Esophagus squamous epithelium (tissue), 5 donors: ENCODE measurements at regions of chr6 and their contacts with region 1.

Region 1: GRCh38 chr6:110398778-110399177 is 16.6 kb downstream of the DDO start:
- DNase-seq: no peak
- H3K4me3 ChIP-seq: no peak overlapping the region
- H3K27ac ChIP-seq: no peak overlapping the region
- H3K4me1 ChIP-seq: peaks cover 0 to 17% (median 0%) of the 10 kb centered on the region in 3 donors
- H3K27me3 ChIP-seq: no peaks in the 10 kb centered on the region
- CTCF ChIP-seq: no peak
- POLR2A ChIP-seq: no peak

Region 2: DNA sequence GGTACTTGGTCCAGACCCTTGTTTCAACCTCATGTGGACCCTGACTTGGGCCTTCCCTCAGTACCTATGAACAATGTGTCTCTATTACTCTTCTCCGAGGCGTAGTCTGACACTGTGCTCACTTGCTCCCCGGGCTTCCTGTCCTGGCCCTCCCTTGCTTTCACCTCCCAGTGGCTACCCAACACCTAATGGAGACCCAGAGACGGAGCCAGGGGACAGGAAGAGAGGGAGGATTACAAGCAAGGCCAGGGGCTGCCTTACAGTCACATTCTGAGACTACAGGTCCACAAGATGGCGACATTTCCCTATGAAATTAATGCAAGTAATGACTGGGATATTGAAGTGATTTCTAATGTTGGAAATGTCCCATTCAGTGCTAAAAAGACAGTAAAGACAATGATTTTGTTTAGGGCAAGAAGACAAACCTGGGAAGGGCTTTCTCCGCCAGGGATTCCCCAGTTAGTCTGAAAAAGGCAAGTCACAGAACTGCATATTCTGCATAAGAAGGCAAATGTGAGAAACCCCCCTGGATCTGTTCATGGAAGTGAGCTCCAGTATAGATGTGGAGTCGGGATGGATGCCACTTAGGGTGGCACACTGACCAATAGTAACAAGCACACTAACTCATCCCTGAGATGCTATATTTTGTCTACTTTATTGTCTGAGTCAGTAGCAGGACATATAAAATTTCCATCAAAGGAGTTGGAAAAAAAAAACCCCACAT is 871.7 kb before region 1 on chr6:
- intact Hi-C with region 1: loop called (anchors 10 kb)
- DNase-seq: no peak
- H3K4me3 ChIP-seq: no peak overlapping the region
- H3K27ac ChIP-seq: no peak overlapping the region
- H3K4me1 ChIP-seq: no peaks in the 10 kb centered on the region
- H3K27me3 ChIP-seq: no peaks in the 10 kb centered on the region
- CTCF ChIP-seq: peak; percentile 38 to 61 (median 46)
- POLR2A ChIP-seq: no peak

Region 3: DNA sequence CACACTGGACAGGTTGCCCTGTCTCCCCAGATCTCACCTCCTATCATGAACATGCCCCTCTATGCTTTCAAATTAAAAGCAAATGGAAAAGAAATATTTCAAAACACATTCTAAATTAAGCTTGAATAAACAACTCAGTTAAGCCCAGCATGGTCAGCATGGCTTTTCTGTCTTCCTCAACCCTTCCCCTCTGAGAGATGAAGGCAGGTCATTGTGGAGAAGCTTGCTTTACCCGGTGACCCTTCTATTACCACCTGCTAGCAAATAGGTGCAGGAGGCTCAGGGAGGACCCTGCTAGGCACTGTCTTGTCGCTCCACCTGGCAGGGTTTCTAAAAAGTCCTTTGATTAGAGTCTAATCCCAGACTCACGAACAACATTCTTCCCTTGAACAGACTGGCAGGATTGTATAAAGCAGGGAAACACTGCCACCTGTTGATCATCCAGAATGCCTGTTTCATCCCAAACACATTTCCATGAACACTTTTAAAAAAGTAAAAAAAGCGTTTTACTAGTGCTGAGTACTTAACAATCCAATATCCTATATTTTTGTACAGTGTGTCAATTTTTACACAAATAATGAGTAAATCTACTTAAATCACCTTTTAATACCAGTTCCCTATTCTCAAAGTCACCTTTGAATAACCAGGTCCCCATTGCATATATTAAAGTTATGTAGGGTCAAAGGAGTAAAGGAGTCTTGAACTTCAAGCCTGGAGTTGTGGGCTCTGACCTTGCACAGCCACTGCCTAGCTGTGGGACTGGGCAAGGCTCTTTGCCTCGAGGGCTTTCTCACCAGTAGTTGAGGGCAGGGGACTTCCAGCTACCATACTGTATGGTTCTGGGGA is 345.2 kb before region 1 on chr6:
- intact Hi-C with region 1: loop called (anchors 10 kb)
- DNase-seq: no peak
- H3K4me3 ChIP-seq: no peak overlapping the region
- H3K27ac ChIP-seq: no peak overlapping the region
- H3K4me1 ChIP-seq: peaks cover 0 to 13% (median 0%) of the 10 kb centered on the region in 3 donors
- H3K27me3 ChIP-seq: no peaks in the 10 kb centered on the region
- CTCF ChIP-seq: peak; percentile 57 to 79 (median 67)
- POLR2A ChIP-seq: no peak

Region 4: GRCh38 chr6:110179401-110180227 is 219.2 kb before region 1 on chr6 and contains the start of gene WASF1:
- intact Hi-C with region 1: loop called (anchors 10 kb)
- DNase-seq: peak; percentile 77
- H3K4me3 ChIP-seq: peak within 1 kb of the TSS; percentile 72 to 84 (median 82)
- H3K27ac ChIP-seq: peak within 1 kb of the TSS; percentile 80 to 92 (median 90)
- H3K4me1 ChIP-seq: peaks cover 24 to 53% (median 27%) of the 10 kb centered on the region in 3 donors
- H3K27me3 ChIP-seq: no peaks in the 10 kb centered on the region
- CTCF ChIP-seq: peak in 1 of 6 experiments; percentile 15
- POLR2A ChIP-seq: peak in 1 of 4 donors; percentile 39
- total RNA-seq, gene WASF1: 10.7 to 20.9 (median 16.3) TPM

Region 5: GRCh38 chr6:110491644-110492317 is 93.0 kb after region 1 on chr6:
- intact Hi-C with region 1: no loop called
- DNase-seq: no peak
- H3K4me3 ChIP-seq: no peak overlapping the region
- H3K27ac ChIP-seq: peak overlapping the region in 1 of 4 donors; percentile 30
- H3K4me1 ChIP-seq: peaks cover 0 to 10% (median 0%) of the 10 kb centered on the region in 3 donors
- H3K27me3 ChIP-seq: peaks cover 0 to 40% (median 0%) of the 10 kb centered on the region in 4 donors
- CTCF ChIP-seq: no peak
- POLR2A ChIP-seq: no peak